ENCODE measurements at regions of chr15 and their contacts with region 1.

Region 1: DNA sequence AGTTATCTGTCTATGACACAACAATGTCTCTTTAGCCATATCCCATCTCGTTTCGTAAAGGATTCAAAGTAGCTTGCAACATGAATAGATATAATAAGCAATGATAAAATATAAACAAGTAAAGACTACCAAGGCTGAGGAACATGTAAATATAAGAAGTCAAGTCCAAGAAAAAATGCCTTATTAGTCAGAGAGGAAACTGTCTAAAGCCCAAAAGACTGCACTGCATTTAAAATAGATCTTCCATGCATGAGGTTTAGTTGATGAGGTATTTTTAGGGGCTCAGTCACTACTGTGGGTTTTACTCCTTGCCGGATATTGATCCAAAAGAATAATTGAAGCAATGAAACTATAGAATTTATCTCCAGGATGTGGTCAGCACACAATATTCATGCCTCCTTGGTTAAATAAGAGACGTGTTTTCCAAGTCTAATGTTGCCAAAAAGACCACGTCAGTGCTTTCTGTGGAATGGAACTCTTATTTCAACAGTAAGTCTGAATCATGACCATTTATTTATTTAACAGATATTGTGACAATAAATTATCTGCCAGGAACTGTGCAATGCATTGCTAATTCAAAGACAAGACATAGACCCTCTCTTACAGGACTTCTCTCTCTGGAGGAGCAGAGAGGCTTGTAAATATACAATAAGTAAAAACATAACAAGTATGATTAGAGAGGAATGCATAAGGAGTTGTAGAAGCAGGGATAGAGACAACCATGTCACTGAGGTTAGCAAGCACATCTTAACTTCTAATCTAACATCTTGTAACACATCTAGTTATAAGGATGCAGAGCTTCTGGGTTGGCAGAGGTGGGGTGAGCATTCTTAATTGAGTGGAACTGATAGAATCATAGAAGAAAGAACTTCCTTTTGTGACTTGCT is 227.3 kb downstream of the DTWD1 start:
- DNase-seq: peak; percentile 99
- ATAC-seq: peak; percentile 80
- H3K4me3 ChIP-seq: no peak overlapping the region
- H3K27ac ChIP-seq: peak overlapping the region; percentile 100
- H3K4me1 ChIP-seq: peaks cover 19% of the 10 kb centered on the region
- H3K27me3 ChIP-seq: no peaks in the 10 kb centered on the region
- CTCF ChIP-seq: no peak
- POLR2A ChIP-seq: no peak
- RAD21 ChIP-seq: no peak; the same call in none of the 2 replicates

Region 2: DNA sequence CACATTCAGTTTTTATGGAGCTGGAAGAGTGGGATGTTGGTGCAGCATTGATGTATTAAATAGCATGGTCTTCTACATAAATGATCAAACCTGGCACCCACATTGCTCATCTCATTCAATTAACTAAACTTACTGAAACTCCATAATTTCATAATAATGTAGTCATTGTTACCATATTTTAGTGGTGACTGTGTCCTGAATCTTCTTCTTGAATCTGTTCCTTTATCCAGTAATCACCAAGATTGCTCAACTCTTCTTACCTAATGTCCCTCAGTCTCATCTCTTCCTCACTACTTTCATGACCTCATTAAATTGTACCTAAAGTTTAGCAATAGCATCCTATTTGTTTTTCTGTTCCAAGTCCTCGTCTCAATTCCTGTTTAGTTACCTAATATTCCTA is 355.4 kb before region 1 on chr15:
- CTCF ChIA-PET with region 1: no interaction called
- POLR2A ChIA-PET with region 1: no interaction called
- dilution Hi-C with region 1: no loop called
- in situ Hi-C with region 1: no loop called
- intact Hi-C with region 1: loop called (anchors 5 kb)
- DNase-seq: peak; percentile 90
- ATAC-seq: no peak
- H3K4me3 ChIP-seq: no peak overlapping the region
- H3K27ac ChIP-seq: no peak overlapping the region
- H3K4me1 ChIP-seq: peaks cover 14% of the 10 kb centered on the region
- H3K27me3 ChIP-seq: no peaks in the 10 kb centered on the region
- CTCF ChIP-seq: no peak
- POLR2A ChIP-seq: no peak
- RAD21 ChIP-seq: no peak

Region 3: GRCh38 chr15:49774689-49775088 is 73.5 kb before region 1 on chr15:
- CTCF ChIA-PET with region 1: no interaction called
- POLR2A ChIA-PET with region 1: no interaction called
- dilution Hi-C with region 1: no loop called
- in situ Hi-C with region 1: no loop called
- intact Hi-C with region 1: no loop called
- DNase-seq: no peak
- ATAC-seq: no peak
- H3K4me3 ChIP-seq: no peak overlapping the region
- H3K27ac ChIP-seq: no peak overlapping the region
- H3K4me1 ChIP-seq: no peaks in the 10 kb centered on the region
- H3K27me3 ChIP-seq: no peaks in the 10 kb centered on the region
- CTCF ChIP-seq: no peak
- POLR2A ChIP-seq: no peak
- RAD21 ChIP-seq: no peak

Region 4: DNA sequence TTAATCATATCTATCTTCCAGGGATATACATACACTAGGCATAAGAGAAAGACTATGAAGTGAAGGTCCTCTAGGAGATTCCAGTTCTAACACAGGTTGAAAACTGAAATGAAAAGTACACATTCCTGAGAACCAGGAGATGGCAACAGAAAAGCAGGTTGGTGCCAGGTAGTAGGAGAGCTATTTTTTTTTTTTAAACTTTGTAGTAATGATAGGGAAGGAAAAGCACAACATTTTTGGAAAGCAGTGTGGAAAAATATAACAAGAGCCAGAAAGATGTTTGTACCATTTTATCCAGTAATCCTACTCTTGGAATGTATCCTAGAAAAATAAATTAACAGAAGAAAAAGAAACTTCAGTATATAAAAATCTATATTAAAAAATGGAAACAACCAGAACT is 37.5 kb before region 1 on chr15:
- CTCF ChIA-PET with region 1: no interaction called
- POLR2A ChIA-PET with region 1: no interaction called
- dilution Hi-C with region 1: no loop called
- in situ Hi-C with region 1: no loop called
- intact Hi-C with region 1: no loop called
- DNase-seq: no peak
- ATAC-seq: no peak
- H3K4me3 ChIP-seq: no peak overlapping the region
- H3K27ac ChIP-seq: no peak overlapping the region
- H3K4me1 ChIP-seq: peaks cover 6% of the 10 kb centered on the region; the same call in 1 of the 2 replicates
- H3K27me3 ChIP-seq: no peaks in the 10 kb centered on the region
- CTCF ChIP-seq: no peak
- POLR2A ChIP-seq: no peak
- RAD21 ChIP-seq: no peak

Region 5: DNA sequence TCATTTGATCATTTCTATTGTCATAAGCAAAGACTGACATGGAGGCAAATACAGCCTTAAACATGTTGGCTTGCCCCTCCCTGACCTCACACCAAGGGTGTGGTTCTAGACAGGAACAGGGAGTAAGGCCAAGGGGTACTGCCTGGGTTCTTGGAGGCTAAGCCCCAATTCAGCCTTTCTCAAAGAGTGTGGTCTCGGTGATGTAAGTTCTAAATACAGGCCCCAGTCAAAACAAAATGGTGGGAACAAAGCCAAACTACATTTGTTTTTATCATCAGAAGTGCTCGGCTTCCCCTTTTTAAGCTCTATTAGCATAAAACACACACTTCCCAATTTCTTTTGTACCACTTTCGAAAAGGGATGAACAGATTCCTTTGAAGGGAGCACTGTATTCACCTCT is 141.3 kb after region 1 on chr15:
- CTCF ChIA-PET with region 1: no interaction called
- POLR2A ChIA-PET with region 1: no interaction called
- dilution Hi-C with region 1: no loop called
- in situ Hi-C with region 1: no loop called
- intact Hi-C with region 1: loop called (anchors 1 kb)
- DNase-seq: no peak
- ATAC-seq: no peak
- H3K4me3 ChIP-seq: no peak overlapping the region
- H3K27ac ChIP-seq: peak overlapping the region; percentile 57; the same call in 1 of the 2 replicates
- H3K4me1 ChIP-seq: peaks cover 20% of the 10 kb centered on the region
- H3K27me3 ChIP-seq: no peaks in the 10 kb centered on the region
- CTCF ChIP-seq: no peak
- POLR2A ChIP-seq: no peak
- RAD21 ChIP-seq: no peak